ENCODE measurements at regions of chr13 and their contacts with region 1.

Region 1: GRCh38 chr13:48037346-48038173 is at the start of gene NUDT15:
- DNase-seq: peak; percentile 90 to 99 (median 96)
- ATAC-seq: peak; percentile 90
- H3K4me3 ChIP-seq: peak within 1 kb of the TSS; percentile 68
- H3K4me3 Mint-ChIP-seq: peak within 1 kb of the TSS; percentile 94
- H3K27ac ChIP-seq: peak within 1 kb of the TSS; percentile 79 to 98
- H3K27ac Mint-ChIP-seq: peak within 1 kb of the TSS; percentile 97
- H3K4me1 ChIP-seq: peaks cover 18% of the 10 kb centered on the region
- H3K4me1 Mint-ChIP-seq: peaks cover 42% of the 10 kb centered on the region
- H3K27me3 ChIP-seq: no peaks in the 10 kb centered on the region
- H3K27me3 Mint-ChIP-seq: no peaks in the 10 kb centered on the region
- CTCF ChIP-seq: peak; percentile 100
- total RNA-seq, gene NUDT15: 14.4 to 16.2 TPM

Region 2: DNA sequence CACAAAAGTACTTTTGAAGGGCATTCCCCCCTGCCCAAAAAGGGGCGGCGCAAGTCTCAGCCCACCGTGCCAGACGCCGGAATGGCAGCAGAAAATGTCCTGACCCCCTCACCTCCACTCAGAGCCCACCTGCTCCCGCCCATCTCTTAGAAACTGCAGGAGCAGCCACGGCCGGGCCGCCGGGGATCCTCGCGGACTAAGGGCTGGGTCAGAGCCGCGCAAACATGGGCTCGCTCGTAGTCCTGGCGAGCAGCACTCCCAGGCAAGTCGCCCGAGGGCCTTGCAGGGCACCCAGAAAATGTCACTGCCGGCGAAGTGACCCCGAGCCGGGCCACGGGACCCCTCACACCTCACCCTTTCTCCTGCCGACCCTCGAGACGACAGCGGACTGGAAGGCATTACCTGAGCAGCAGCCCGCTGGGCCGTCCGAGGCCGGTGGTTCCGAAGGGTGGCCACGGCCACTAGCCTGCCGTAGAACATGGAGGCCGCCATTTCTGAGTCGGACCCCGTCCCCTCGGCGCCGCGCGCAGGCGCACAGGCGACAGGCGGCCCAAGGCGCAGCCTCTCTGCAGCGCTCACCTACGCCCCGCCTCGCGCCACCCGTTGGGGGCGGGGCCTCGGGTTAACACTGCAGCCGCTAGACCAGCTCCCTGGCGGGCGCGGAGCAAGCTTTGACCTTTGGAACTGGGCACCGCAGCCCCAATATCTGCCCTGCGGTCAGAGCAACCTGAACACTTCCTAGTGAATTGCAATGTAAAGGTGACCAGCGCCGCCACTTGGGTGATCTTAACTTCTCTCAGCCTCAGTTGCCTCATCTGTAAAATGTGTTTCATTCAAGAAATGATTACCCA is 36.6 kb before region 1 on chr13 and contains the start of gene SUCLA2:
- CTCF ChIA-PET with region 1: interaction called, 10 read pairs
- POLR2A ChIA-PET with region 1: interaction called, 12 read pairs
- intact Hi-C with region 1: loop called (anchors 1 to 2 kb)
- DNase-seq: peak; percentile 76 to 94 (median 88)
- ATAC-seq: peak; percentile 99
- H3K4me3 ChIP-seq: peak within 1 kb of the TSS; percentile 99
- H3K4me3 Mint-ChIP-seq: peak within 1 kb of the TSS; percentile 96
- H3K27ac ChIP-seq: peak within 1 kb of the TSS; percentile 58
- H3K27ac Mint-ChIP-seq: peak within 1 kb of the TSS; percentile 90
- H3K4me1 ChIP-seq: peaks cover 6% of the 10 kb centered on the region
- H3K4me1 Mint-ChIP-seq: peaks cover 46% of the 10 kb centered on the region
- H3K27me3 ChIP-seq: no peaks in the 10 kb centered on the region
- H3K27me3 Mint-ChIP-seq: no peaks in the 10 kb centered on the region
- CTCF ChIP-seq: no peak
- total RNA-seq, gene SUCLA2: 18.7 to 21.4 TPM

Region 3: GRCh38 chr13:48050550-48050949 is 13.0 kb after region 1 on chr13:
- CTCF ChIA-PET with region 1: interaction called, 31 read pairs
- POLR2A ChIA-PET with region 1: interaction called, 18 read pairs
- intact Hi-C with region 1: no loop called
- DNase-seq: no peak
- ATAC-seq: no peak
- H3K4me3 ChIP-seq: no peak overlapping the region
- H3K4me3 Mint-ChIP-seq: no peak overlapping the region
- H3K27ac ChIP-seq: no peak overlapping the region
- H3K27ac Mint-ChIP-seq: no peak overlapping the region
- H3K4me1 ChIP-seq: no peaks in the 10 kb centered on the region
- H3K4me1 Mint-ChIP-seq: no peaks in the 10 kb centered on the region
- H3K27me3 ChIP-seq: no peaks in the 10 kb centered on the region
- H3K27me3 Mint-ChIP-seq: no peaks in the 10 kb centered on the region
- CTCF ChIP-seq: no peak

Region 4: DNA sequence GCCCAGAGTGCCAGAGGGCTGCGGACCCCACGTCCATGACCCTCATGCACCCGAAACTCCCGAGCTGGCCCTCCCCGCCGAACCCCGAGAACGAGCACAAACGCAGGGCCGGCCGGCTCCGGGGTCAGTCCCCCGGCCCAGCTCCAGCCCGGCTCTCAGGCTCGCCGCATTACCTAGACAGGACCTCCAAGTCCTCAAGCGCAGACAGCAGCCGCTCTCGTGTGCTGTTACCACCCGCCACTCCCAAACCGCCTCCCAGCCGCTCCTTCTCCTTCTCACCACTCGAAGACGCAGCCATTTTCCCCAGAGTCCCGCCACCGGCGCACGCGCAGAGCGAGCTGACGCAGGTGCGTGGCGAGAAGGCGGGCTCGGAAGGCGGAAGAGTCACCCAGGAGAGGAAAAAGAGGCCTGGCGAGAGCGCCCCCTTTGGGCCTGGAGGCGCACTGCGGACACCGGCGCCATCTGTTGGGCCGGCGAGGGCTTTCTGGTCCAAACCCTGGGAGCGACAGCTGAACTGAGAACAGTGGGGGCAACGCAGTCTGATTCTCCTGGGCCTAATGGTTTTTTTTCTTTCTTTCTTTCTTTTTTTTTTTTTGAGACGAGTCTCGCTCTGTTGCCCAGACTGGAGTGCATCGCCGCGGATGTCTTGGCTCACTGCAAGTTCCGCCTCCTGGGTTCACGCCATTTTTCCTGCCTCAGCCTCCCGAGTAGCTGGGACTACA is 57.4 kb after region 1 on chr13 and contains the start of gene MED4:
- CTCF ChIA-PET with region 1: interaction called, 48 read pairs
- POLR2A ChIA-PET with region 1: interaction called, 40 read pairs
- intact Hi-C with region 1: loop called (anchors 1 kb)
- DNase-seq: peak; percentile 95 to 99 (median 97)
- ATAC-seq: peak; percentile 98
- H3K4me3 ChIP-seq: peak within 1 kb of the TSS; percentile 85
- H3K4me3 Mint-ChIP-seq: peak within 1 kb of the TSS; percentile 100
- H3K27ac ChIP-seq: peak within 1 kb of the TSS; percentile 84 to 89
- H3K27ac Mint-ChIP-seq: peak within 1 kb of the TSS; percentile 95
- H3K4me1 ChIP-seq: peaks cover 23% of the 10 kb centered on the region
- H3K4me1 Mint-ChIP-seq: peaks cover 53% of the 10 kb centered on the region
- H3K27me3 ChIP-seq: no peaks in the 10 kb centered on the region
- H3K27me3 Mint-ChIP-seq: no peaks in the 10 kb centered on the region
- CTCF ChIP-seq: peak; percentile 99
- total RNA-seq, gene MED4: 48.9 to 56.1 TPM

Region 5: GRCh38 chr13:48303359-48304142 is 266.0 kb after region 1 on chr13 and contains the start of gene RB1:
- CTCF ChIA-PET with region 1: interaction called, 3 read pairs
- POLR2A ChIA-PET with region 1: interaction called, 9 read pairs
- intact Hi-C with region 1: loop called in 1 of 2 experiments (anchors 5 kb)
- DNase-seq: peak; percentile 77 to 97 (median 85)
- ATAC-seq: peak; percentile 72
- H3K4me3 ChIP-seq: peak within 1 kb of the TSS; percentile 95
- H3K4me3 Mint-ChIP-seq: peak within 1 kb of the TSS; percentile 92
- H3K27ac ChIP-seq: peak within 1 kb of the TSS; percentile 97 to 98
- H3K27ac Mint-ChIP-seq: peak within 1 kb of the TSS; percentile 97
- H3K4me1 ChIP-seq: peaks cover 18% of the 10 kb centered on the region
- H3K4me1 Mint-ChIP-seq: peaks cover 45% of the 10 kb centered on the region
- H3K27me3 ChIP-seq: no peaks in the 10 kb centered on the region
- H3K27me3 Mint-ChIP-seq: no peaks in the 10 kb centered on the region
- CTCF ChIP-seq: no peak
- total RNA-seq, gene RB1: 14.9 to 18.4 TPM

Region 6: GRCh38 chr13:49784886-49785570 is 1747.5 kb after region 1 on chr13:
- CTCF ChIA-PET with region 1: no interaction called
- POLR2A ChIA-PET with region 1: no interaction called
- intact Hi-C with region 1: loop called in 1 of 2 experiments (anchors 10 kb)
- DNase-seq: no peak
- ATAC-seq: no peak
- H3K4me3 ChIP-seq: no peak overlapping the region
- H3K4me3 Mint-ChIP-seq: peak overlapping the region; percentile 36
- H3K27ac ChIP-seq: no peak overlapping the region
- H3K27ac Mint-ChIP-seq: no peak overlapping the region
- H3K4me1 ChIP-seq: peaks cover 2% of the 10 kb centered on the region
- H3K4me1 Mint-ChIP-seq: peaks cover 78% of the 10 kb centered on the region
- H3K27me3 ChIP-seq: no peaks in the 10 kb centered on the region
- H3K27me3 Mint-ChIP-seq: no peaks in the 10 kb centered on the region
- CTCF ChIP-seq: no peak